Keratinocyte (primary cell): ENCODE measurements at regions of chr1 and their contacts with region 1.

Region 1: GRCh38 chr1:166432655-166433054 is 265.9 kb upstream of the FAM78B start:
- DNase-seq: no peak
- H3K4me3 ChIP-seq: no peak overlapping the region
- H3K27ac ChIP-seq: no peak overlapping the region
- H3K4me1 ChIP-seq: no peaks in the 10 kb centered on the region
- H3K27me3 ChIP-seq: no peaks in the 10 kb centered on the region
- CTCF ChIP-seq: no peak

Region 2: GRCh38 chr1:165928075-165928731 is 504.5 kb before region 1 on chr1:
- dilution Hi-C with region 1: loop called (anchors 5 kb)
- DNase-seq: peak; percentile 11
- H3K4me3 ChIP-seq: no peak overlapping the region
- H3K27ac ChIP-seq: no peak overlapping the region
- H3K4me1 ChIP-seq: no peaks in the 10 kb centered on the region
- H3K27me3 ChIP-seq: no peaks in the 10 kb centered on the region
- CTCF ChIP-seq: peak; percentile 64 to 78 (median 74)

Region 3: GRCh38 chr1:166395729-166396128 is 36.9 kb before region 1 on chr1:
- dilution Hi-C with region 1: no loop called
- DNase-seq: no peak
- H3K4me3 ChIP-seq: no peak overlapping the region
- H3K27ac ChIP-seq: no peak overlapping the region
- H3K4me1 ChIP-seq: no peaks in the 10 kb centered on the region
- H3K27me3 ChIP-seq: no peaks in the 10 kb centered on the region
- CTCF ChIP-seq: no peak